ENCODE measurements at regions of chr14 and their contacts with region 1.

Region 1: GRCh38 chr14:52552063-52552988 is at the starts of genes GPR137C and TXNDC16:
- DNase-seq: peak; percentile 94
- ATAC-seq: peak; percentile 95
- H3K4me3 Mint-ChIP-seq: peak within 1 kb of the TSS; percentile 95
- H3K27ac Mint-ChIP-seq: peak within 1 kb of the TSS; percentile 87
- H3K4me1 Mint-ChIP-seq: peaks cover 26% of the 10 kb centered on the region
- H3K27me3 Mint-ChIP-seq: peaks cover 26% of the 10 kb centered on the region
- total RNA-seq, gene GPR137C: 0.45 to 0.47 TPM
- total RNA-seq, gene TXNDC16: 10.1 to 13.2 TPM

Region 2: GRCh38 chr14:52536269-52536668 is 16.1 kb before region 1 on chr14:
- POLR2A ChIA-PET with region 1: interaction called, 14 read pairs
- DNase-seq: no peak
- ATAC-seq: no peak
- H3K4me3 Mint-ChIP-seq: no peak overlapping the region
- H3K27ac Mint-ChIP-seq: no peak overlapping the region
- H3K4me1 Mint-ChIP-seq: peaks cover 9% of the 10 kb centered on the region
- H3K27me3 Mint-ChIP-seq: no peaks in the 10 kb centered on the region